ENCODE measurements at regions of chr10 and their contacts with region 1.

Region 1: GRCh38 chr10:1199897-1200721 is 143.9 kb downstream of the WDR37 start:
- DNase-seq: peak in 1 of 3 donors; percentile 40
- ATAC-seq: peak in 1 of 4 donors; percentile 25
- H3K4me3 ChIP-seq: no peak overlapping the region
- H3K27ac ChIP-seq: no peak overlapping the region
- H3K4me1 ChIP-seq: no peaks in the 10 kb centered on the region
- H3K27me3 ChIP-seq: no peaks in the 10 kb centered on the region
- CTCF ChIP-seq: no peak
- POLR2A ChIP-seq: no peak

Region 2: DNA sequence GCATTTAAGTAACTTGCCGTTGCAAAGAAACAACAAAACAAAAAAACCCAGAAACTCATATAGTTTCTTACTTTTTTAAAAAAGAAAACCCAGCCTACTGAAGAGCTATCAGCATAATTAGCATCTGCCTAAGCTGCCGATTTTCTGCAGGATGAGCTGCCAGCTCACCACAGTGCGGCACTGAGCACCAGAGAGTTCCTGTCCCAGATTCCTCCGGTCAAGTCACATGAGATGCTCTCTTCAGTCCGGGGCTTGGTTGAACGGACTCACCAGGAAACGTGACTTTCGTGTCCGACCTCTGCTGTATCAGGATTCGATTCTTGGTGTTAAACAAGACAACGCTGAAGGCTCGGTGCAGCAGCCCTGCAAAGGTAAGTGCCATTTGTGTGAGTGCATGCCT is 177.7 kb before region 1 on chr10:
- intact Hi-C with region 1: loop called in 1 of 2 experiments (anchors 5 kb)
- DNase-seq: no peak
- ATAC-seq: peak in 1 of 4 donors; percentile 25
- H3K4me3 ChIP-seq: no peak overlapping the region
- H3K27ac ChIP-seq: no peak overlapping the region
- H3K4me1 ChIP-seq: no peaks in the 10 kb centered on the region
- H3K27me3 ChIP-seq: no peaks in the 10 kb centered on the region
- CTCF ChIP-seq: no peak
- POLR2A ChIP-seq: no peak

Region 3: GRCh38 chr10:1412531-1413189 is 212.6 kb after region 1 on chr10:
- intact Hi-C with region 1: no loop called
- DNase-seq: peak in 1 of 3 donors; percentile 13
- ATAC-seq: no peak
- H3K4me3 ChIP-seq: no peak overlapping the region
- H3K27ac ChIP-seq: no peak overlapping the region
- H3K4me1 ChIP-seq: no peaks in the 10 kb centered on the region
- H3K27me3 ChIP-seq: peaks cover 0 to 2% of the 10 kb centered on the region in 2 donors
- CTCF ChIP-seq: no peak
- POLR2A ChIP-seq: no peak